ENCODE measurements at regions of chr4 and their contacts with region 1.

Region 1: DNA sequence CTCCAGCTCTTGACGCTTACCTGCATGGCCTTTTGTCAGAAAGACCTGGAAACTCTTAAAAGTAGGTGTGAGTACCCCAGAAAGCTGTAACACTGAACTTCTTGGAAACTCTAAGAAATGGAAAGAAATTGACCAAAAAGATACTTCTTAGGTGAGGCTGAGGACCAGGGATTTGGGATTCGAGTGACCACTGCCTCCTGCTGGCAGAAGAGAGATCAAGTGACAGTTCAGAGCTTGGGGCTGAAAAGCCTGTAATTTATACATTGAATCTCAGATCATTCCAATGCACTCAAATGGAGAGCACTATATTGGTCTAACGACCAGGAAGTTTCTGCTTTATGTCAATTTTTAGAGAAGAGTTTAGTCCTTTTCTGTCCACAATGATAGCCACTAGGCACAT is 204.6 kb downstream of the PDGFRA start:
- DNase-seq: no peak
- H3K4me3 ChIP-seq: no peak overlapping the region
- H3K27ac ChIP-seq: no peak overlapping the region
- H3K4me1 ChIP-seq: no peaks in the 10 kb centered on the region
- H3K27me3 ChIP-seq: no peaks in the 10 kb centered on the region
- CTCF ChIP-seq: peak in 2 of 3 experiments; percentile 17 to 32

Region 2: GRCh38 chr4:54333657-54334056 is 100.0 kb before region 1 on chr4:
- intact Hi-C with region 1: loop called (anchors 5 kb)
- DNase-seq: no peak
- H3K4me3 ChIP-seq: no peak overlapping the region
- H3K27ac ChIP-seq: no peak overlapping the region
- H3K4me1 ChIP-seq: no peaks in the 10 kb centered on the region
- H3K27me3 ChIP-seq: no peaks in the 10 kb centered on the region
- CTCF ChIP-seq: no peak

Region 3: DNA sequence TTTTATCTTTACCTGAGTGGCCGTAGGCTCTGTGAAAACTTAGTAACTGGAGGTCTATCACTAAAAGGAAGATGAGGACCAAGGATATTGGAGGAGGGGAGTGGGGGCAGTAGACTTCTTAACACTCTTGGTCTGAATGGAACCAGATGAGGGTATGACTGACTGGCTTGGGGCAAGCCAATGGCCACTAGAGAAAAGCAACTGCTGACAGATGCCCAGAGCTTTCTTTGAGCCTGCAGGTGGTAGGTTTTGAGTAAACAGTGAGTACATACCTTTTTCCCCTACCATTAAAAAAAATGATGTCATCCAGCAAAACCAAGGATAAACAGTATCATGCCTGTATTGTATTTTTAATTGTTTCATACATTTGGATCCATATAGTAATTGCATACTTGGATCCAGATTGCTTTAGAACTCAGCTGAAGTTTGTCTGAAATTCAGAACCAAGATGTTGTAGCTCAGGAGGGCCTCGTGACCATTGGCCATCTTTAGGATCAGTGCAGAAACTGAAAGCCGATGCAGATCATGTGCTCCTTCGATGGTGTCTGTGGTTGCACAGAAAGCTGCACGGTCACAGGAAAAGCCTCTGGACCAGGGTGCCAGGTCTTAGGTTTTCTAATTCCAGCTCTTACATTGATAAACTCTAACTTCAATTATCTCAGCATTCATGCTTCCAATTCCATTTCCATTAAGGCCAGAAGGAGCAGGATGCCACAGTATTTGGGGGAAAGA is 73.6 kb before region 1 on chr4:
- intact Hi-C with region 1: no loop called
- DNase-seq: no peak
- H3K4me3 ChIP-seq: no peak overlapping the region
- H3K27ac ChIP-seq: no peak overlapping the region
- H3K4me1 ChIP-seq: no peaks in the 10 kb centered on the region
- H3K27me3 ChIP-seq: no peaks in the 10 kb centered on the region
- CTCF ChIP-seq: no peak